Activated naive CD4-positive, alpha-beta T cell treated with anti-CD3 and anti-CD28 coated beads for 36 hours (primary cell): ENCODE measurements at regions of chr16 and their contacts with region 1.

Region 1: GRCh38 chr16:28140788-28141618 is 70.8 kb downstream of the XPO6 start:
- DNase-seq: peak; percentile 91
- H3K4me3 Mint-ChIP-seq: peak overlapping the region; percentile 70
- H3K27ac Mint-ChIP-seq: peak overlapping the region; percentile 97
- H3K4me1 Mint-ChIP-seq: peaks cover 87% of the 10 kb centered on the region
- H3K27me3 Mint-ChIP-seq: no peaks in the 10 kb centered on the region

Region 2: DNA sequence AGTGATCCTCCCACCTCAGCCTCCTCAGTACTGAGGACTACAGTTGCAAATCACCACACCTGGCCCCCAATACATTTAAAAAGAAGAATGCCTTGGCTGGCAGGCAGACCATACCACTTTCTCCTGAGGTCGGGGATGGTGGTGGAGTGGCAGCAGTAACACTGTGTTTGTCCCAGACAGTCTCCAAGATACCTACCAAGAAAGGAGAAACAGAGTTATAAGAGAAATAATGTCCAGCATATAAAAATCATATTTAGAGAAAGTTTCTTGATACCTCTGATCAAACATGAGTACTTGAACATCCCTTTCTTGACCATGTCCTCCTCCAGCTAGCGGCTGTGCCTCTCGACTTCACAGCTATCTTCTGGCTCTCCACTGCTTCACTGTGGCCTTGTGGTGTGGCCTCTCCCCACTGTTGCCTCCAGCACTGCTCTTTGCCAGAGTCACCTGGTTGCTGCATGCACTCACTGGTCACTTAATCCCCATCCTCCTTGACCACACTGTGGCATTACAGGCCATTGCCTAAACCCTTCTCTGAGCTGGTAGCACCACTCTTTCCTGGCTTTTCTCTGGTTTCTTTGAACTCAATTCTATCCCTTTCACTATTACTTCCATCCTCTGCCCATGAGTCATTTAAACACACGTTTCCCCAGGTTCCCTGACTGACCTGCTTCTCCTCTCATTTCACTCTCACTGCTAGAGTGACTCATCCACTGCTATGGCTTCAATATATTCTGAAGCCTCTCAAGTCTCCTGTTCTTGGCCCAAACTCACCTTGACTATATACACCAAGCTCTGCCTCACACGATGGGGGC is 25.6 kb after region 1 on chr16:
- CTCF ChIA-PET with region 1: interaction called, 3 read pairs
- intact Hi-C with region 1: loop called (anchors 1 kb)
- DNase-seq: peak; percentile 60
- H3K4me3 Mint-ChIP-seq: no peak overlapping the region
- H3K27ac Mint-ChIP-seq: peak overlapping the region; percentile 90
- H3K4me1 Mint-ChIP-seq: peaks cover 85% of the 10 kb centered on the region
- H3K27me3 Mint-ChIP-seq: no peaks in the 10 kb centered on the region

Region 3: DNA sequence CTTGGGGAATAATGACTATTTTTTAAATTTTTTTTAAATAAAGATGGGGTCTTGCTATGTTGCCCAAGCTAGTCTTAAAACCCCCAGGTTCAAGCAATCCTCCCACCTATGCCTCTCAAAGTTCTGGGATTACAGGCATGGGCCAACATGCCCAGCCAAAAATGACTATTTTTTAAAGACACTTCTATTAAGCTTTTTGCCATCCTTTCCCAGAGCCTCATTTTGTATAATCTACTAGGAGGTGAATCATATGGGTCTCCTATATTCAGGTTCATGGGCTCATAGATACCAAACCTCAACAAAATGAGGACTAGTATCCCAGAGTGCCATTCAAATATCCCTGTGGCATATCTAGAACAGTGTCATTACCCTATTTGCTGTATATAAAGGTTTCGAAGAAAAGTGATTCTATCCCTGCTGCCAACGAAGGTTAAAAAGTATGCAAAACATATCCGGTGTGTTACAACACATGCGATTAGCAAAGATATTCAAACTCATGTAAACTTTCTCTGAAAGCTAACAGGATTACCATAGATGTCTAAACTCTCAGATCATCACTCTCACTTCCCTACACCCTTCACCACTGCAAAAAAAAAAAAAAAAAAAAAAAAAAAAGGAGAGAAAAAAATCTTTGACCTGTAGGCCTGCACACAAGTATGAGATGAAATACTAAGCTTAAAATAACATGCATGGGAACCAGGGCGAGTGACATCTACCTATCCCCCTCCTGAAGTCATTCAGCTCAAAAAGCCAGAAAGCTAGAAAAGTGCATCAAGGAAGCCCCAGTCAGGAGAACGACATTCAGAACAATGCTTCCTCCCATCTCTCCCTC is 47.3 kb after region 1 on chr16:
- CTCF ChIA-PET with region 1: interaction called, 8 read pairs
- intact Hi-C with region 1: loop called (anchors 1 kb)
- DNase-seq: no peak
- H3K4me3 Mint-ChIP-seq: peak overlapping the region; percentile 43
- H3K27ac Mint-ChIP-seq: peak overlapping the region; percentile 89
- H3K4me1 Mint-ChIP-seq: peaks cover 88% of the 10 kb centered on the region
- H3K27me3 Mint-ChIP-seq: no peaks in the 10 kb centered on the region

Region 4: DNA sequence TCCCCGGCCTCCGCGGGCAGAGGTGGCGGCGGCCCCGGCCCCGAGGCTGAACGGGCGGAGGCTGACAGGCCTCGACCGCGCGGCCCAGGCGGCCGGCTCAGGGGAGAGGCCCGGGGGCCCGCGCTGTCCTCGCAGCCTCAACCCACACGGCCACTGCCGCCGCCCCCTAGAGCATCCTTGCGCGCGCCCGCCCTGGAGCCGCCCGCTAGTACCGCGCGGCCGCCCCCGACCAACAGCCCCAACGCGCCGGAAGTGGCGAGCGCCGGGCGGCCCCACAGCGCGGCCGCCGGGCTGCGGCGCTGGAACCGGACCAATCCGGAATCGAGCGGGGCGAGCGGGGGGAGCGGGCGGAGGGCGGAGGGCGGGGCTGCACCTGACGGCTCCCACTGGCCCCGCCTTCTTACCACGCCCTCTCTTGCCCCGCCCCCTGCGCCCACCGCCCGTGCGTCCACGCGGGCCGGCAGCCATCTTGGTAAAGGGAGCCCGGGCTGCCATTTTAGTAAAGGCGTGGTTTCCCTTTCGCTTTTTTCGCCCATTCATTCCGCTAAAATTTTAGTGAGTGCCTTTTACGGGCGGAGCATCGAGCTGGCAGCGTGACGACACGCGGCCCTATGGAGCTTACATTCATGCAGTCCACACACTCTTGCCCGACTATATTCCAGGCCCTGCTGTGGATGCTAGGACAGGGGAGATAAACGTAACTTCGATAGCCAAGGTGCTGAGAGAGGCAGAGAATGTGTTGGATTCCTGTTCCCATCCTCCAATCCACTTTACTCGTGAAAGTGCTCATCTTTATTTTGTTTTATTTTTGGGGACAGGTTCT is 70.9 kb after region 1 on chr16 and contains the start of gene XPO6:
- CTCF ChIA-PET with region 1: interaction called, 69 read pairs
- intact Hi-C with region 1: loop called (anchors 1 kb)
- DNase-seq: peak; percentile 99
- H3K4me3 Mint-ChIP-seq: peak within 1 kb of the TSS; percentile 96
- H3K27ac Mint-ChIP-seq: peak within 1 kb of the TSS; percentile 93
- H3K4me1 Mint-ChIP-seq: peaks cover 29% of the 10 kb centered on the region
- H3K27me3 Mint-ChIP-seq: no peaks in the 10 kb centered on the region
- total RNA-seq, gene XPO6: 215 to 229 TPM

Region 5: GRCh38 chr16:28277537-28278388 is 136.8 kb after region 1 on chr16:
- CTCF ChIA-PET with region 1: no interaction called
- intact Hi-C with region 1: loop called (anchors 1 kb)
- DNase-seq: peak; percentile 88
- H3K4me3 Mint-ChIP-seq: peak overlapping the region; percentile 66
- H3K27ac Mint-ChIP-seq: no peak overlapping the region
- H3K4me1 Mint-ChIP-seq: peaks cover 31% of the 10 kb centered on the region
- H3K27me3 Mint-ChIP-seq: no peaks in the 10 kb centered on the region